ENCODE measurements at regions of chr10 and their contacts with region 1.

Region 1: GRCh38 chr10:68156373-68157185 is 47.3 kb downstream of the MYPN start:
- DNase-seq: peak in 4 of 5 donors; percentile 47 to 62 (median 56)
- ATAC-seq: peak in 2 of 4 donors; percentile 16 to 18
- H3K4me3 ChIP-seq: no peak overlapping the region
- H3K27ac ChIP-seq: peak overlapping the region in 10 of 12 donors; percentile 17 to 92 (median 66)
- H3K4me1 ChIP-seq: peaks cover 0 to 50% (median 15%) of the 10 kb centered on the region in 12 donors
- H3K27me3 ChIP-seq: no peaks in the 10 kb centered on the region
- CTCF ChIP-seq: peak; percentile 63 to 90 (median 84)
- POLR2A ChIP-seq: no peak

Region 2: DNA sequence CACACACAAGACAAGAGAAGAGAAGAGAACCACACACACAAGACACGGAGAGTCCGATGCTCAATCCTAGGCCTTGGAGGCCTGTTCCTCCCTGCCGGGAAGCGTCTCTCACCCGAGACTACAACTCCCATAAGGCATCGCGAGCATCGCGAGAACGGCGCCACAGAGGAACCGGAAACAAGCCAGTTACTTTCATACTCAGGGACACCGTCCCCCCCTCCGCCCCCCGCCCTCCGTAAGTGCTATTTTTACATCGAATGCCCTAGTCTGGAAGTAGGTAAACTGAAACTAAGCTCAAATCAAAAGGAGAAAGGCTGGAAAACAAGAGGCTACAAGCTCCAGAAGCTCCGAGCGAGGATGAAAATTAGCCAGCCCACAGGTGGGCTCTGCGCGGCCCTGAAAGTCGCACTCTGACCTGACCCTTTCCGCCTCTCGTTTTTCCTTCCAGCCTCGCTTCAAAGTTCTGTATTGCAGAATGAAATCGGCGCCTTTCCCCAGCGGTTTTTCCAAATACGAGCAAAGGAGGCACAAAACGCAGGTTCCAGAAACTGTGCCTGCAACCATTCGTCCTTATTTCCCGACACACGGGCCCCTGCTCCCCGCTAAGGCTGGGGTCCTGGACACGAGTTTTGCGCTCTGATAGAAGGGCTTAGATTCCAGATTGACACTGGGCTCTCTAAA is 307.1 kb before region 1 on chr10:
- intact Hi-C with region 1: loop called in 1 of 10 experiments (anchors 10 kb)
- DNase-seq: peak; percentile 95 to 98 (median 96)
- ATAC-seq: peak; percentile 98 to 99 (median 99)
- H3K4me3 ChIP-seq: peak overlapping the region; percentile 55 to 99 (median 80)
- H3K27ac ChIP-seq: peak overlapping the region; percentile 89 to 99 (median 95)
- H3K4me1 ChIP-seq: peaks cover 0 to 8% (median 5%) of the 10 kb centered on the region in 12 donors
- H3K27me3 ChIP-seq: no peaks in the 10 kb centered on the region
- CTCF ChIP-seq: peak in 1 of 12 donors; percentile 34
- POLR2A ChIP-seq: peak in 1 of 2 donors; percentile 53

Region 3: DNA sequence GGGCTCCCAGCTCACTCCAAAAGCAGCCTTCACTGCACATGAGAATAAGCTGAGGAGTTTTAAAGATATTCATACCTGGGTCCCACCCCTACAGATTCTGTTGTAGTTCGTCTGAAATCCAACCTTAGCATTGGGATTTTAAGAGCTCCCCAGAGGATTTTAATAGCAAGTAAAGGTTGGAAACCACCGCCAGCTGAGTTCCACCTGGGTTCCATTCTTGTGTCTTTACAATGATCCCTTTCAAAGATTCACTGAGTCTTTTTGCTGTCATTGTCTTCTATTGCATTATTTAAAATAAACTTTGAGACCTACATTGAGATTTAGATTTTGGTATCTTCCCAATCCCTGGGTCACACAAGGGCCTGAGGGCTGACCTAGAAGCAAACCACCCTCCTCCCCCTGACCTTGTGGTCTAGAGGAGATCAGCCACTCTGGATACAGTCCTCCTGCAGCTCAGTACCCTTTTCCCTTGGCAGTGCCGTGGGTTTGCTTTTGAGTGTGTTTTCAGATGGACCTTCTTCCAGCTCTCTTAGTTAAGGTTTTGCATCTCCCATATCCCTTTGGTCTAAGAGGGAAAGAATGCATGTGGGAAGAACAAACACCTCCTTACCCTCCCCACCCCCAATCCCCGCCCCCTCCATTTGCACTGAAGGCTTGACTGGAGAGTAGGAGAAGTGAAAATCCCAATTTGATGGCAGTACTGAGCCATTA is 294.7 kb before region 1 on chr10:
- intact Hi-C with region 1: loop called in 7 of 10 experiments (anchors 2 to 10 kb)
- DNase-seq: no peak
- ATAC-seq: no peak
- H3K4me3 ChIP-seq: no peak overlapping the region
- H3K27ac ChIP-seq: no peak overlapping the region
- H3K4me1 ChIP-seq: peaks cover 0 to 5% (median 0%) of the 10 kb centered on the region in 12 donors
- H3K27me3 ChIP-seq: no peaks in the 10 kb centered on the region
- CTCF ChIP-seq: no peak
- POLR2A ChIP-seq: no peak

Region 4: DNA sequence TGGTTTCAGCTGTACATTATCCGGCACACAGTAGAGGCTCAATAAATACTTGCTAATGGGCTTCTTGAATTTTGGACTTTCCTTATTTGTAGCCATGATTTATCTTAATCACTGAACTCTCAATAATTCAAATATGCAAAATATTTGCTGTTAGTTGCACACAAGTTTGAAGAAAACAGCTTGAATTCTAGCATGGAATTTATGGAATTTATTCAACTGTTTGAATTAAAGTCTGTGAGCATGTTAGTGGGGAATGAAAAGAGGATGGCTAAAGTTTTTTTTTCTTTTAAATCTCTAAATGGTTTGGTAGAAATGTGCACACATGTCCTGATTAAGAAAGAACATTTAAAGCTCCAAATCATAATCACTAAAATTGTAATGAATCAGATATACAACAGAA is 229.6 kb before region 1 on chr10:
- intact Hi-C with region 1: no loop called
- DNase-seq: no peak
- ATAC-seq: no peak
- H3K4me3 ChIP-seq: no peak overlapping the region
- H3K27ac ChIP-seq: no peak overlapping the region
- H3K4me1 ChIP-seq: no peaks in the 10 kb centered on the region
- H3K27me3 ChIP-seq: no peaks in the 10 kb centered on the region
- CTCF ChIP-seq: no peak
- POLR2A ChIP-seq: no peak

Region 5: DNA sequence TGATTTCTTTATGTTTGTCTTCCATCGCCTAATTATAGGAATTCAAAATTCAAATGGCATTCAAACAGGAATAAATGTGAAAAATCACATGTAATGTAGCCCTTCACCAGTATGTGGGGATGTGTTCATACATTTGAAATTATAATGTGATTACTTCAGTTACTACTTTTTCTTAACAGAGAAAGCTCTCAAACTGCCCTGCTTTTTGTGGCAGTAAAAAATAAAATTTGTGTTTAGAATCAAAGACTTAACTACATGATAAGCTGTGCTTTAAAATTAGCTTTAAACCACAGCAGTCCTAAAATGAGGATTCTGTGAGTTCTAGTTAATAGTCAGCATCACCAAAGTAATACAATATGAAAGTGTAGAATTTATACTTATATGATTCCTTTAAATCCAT is 73.7 kb before region 1 on chr10:
- intact Hi-C with region 1: loop called (anchors 1 to 5 kb)
- DNase-seq: no peak
- ATAC-seq: peak in 1 of 4 donors; percentile 48
- H3K4me3 ChIP-seq: no peak overlapping the region
- H3K27ac ChIP-seq: peak overlapping the region in 2 of 12 donors; percentile 42 to 44
- H3K4me1 ChIP-seq: peaks cover 0 to 26% (median 0%) of the 10 kb centered on the region in 12 donors
- H3K27me3 ChIP-seq: no peaks in the 10 kb centered on the region
- CTCF ChIP-seq: peak in 9 of 12 donors; percentile 29 to 60 (median 48)
- POLR2A ChIP-seq: no peak

Region 6: DNA sequence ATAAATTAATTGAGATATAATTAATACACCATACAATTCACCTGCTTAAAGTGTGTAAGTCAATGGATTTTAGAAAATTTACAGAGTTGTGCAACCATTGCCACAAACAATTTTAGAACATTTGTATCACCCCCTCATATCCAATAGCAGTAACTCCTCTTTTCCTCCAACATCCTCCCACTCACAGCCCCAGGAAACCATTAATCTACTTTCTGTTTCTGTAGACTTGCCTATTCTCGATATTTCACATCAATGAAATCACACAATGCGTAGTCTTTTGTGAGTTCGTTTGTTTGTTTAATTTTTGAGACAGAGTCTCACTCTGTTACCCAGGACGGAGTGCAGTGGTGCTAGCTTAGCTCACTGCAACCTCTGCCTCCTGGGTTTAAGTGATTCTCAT is 67.8 kb before region 1 on chr10:
- intact Hi-C with region 1: loop called (anchors 1 to 5 kb)
- DNase-seq: no peak
- ATAC-seq: peak in 1 of 4 donors; percentile 8
- H3K4me3 ChIP-seq: peak overlapping the region in 10 of 12 donors; percentile 3 to 56 (median 44)
- H3K27ac ChIP-seq: peak overlapping the region in 8 of 12 donors; percentile 24 to 87 (median 78)
- H3K4me1 ChIP-seq: peaks cover 0 to 17% (median 0%) of the 10 kb centered on the region in 12 donors
- H3K27me3 ChIP-seq: no peaks in the 10 kb centered on the region
- CTCF ChIP-seq: no peak
- POLR2A ChIP-seq: no peak

Measured in heart left ventricle (tissue), 16 donors.